WTC11 (cell line): ENCODE measurements at regions of chr1 and their contacts with region 1.

Region 1: GRCh38 chr1:40338745-40339424 is 21.8 kb upstream of the COL9A2 start:
- DNase-seq: peak; percentile 96
- ATAC-seq: peak; percentile 98
- H3K4me3 Mint-ChIP-seq: no peak overlapping the region
- H3K27ac Mint-ChIP-seq: no peak overlapping the region
- H3K4me1 Mint-ChIP-seq: 0 out of 2 replicates have a peak, but pooled peaks cover 3% of the 10 kb centered on the region
- H3K27me3 Mint-ChIP-seq: peaks cover 37% of the 10 kb centered on the region
- CTCF ChIP-seq: peak; percentile 96

Region 2: GRCh38 chr1:40153073-40153770 is 185.7 kb before region 1 on chr1:
- CTCF ChIA-PET with region 1: interaction called, 84 read pairs
- POLR2A ChIA-PET with region 1: interaction called, 6 read pairs
- DNase-seq: no peak
- ATAC-seq: peak; percentile 58
- H3K4me3 Mint-ChIP-seq: no peak overlapping the region
- H3K27ac Mint-ChIP-seq: no peak overlapping the region
- H3K4me1 Mint-ChIP-seq: no peaks in the 10 kb centered on the region
- H3K27me3 Mint-ChIP-seq: peaks cover 4% of the 10 kb centered on the region
- CTCF ChIP-seq: peak; percentile 2; the same call in 1 of the 2 replicates

Region 3: DNA sequence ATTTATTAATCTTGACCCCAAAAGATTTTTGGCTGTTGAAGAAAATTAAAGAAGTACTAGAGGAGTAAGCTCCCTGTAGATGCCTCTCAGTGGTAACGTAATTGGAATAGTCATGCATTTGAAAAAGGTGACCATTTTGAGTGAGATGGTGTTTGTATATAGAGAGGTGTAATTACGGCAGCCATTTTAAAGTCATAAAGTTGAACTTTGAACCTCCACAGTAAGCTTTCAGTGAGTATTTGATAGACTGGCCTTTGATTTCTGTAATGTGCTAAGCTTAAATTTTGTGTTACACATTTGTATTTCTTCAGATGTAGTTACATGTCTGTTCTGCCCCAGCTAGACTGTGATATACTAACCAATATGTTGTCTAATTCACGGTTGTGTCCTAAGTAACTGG is 112.7 kb before region 1 on chr1:
- CTCF ChIA-PET with region 1: interaction called, 16 read pairs
- POLR2A ChIA-PET with region 1: no interaction called
- DNase-seq: no peak
- ATAC-seq: no peak
- H3K4me3 Mint-ChIP-seq: no peak overlapping the region
- H3K27ac Mint-ChIP-seq: peak overlapping the region; percentile 74; the same call in 1 of the 2 replicates
- H3K4me1 Mint-ChIP-seq: no peaks in the 10 kb centered on the region
- H3K27me3 Mint-ChIP-seq: no peaks in the 10 kb centered on the region
- CTCF ChIP-seq: no peak

Region 4: DNA sequence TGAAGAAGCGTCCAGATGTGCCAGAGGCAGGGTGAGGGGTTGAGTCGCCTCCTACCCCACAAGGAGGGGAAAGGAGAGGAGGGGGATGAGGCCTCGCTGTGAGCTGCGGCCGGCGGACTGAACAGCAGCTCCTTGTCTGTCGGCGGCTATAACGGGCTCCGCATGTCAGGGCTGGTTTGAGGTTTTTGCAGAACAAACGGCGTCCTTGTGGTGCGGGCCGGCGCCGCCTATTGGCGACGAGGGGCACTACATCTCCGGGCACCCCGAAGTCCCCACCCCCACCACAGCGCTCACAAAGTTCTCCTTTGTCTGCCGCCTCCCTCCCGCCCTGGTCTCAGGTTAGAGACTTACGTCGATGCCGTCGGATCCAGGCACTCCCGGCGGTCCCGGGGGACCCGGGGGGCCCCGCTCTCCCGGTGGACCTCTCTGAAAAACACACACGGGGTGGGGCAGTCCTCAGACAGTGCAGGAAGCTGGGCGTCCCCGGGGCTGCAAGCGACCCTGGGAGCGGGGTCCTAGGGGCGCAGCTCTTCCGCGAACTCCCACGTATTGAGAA is 23.6 kb before region 1 on chr1:
- CTCF ChIA-PET with region 1: interaction called, 151 read pairs
- POLR2A ChIA-PET with region 1: interaction called, 3 read pairs
- DNase-seq: peak; percentile 89
- ATAC-seq: peak; percentile 65
- H3K4me3 Mint-ChIP-seq: peak overlapping the region; percentile 73
- H3K27ac Mint-ChIP-seq: no peak overlapping the region
- H3K4me1 Mint-ChIP-seq: peaks cover 20% of the 10 kb centered on the region
- H3K27me3 Mint-ChIP-seq: peaks cover 80% of the 10 kb centered on the region
- CTCF ChIP-seq: peak; percentile 96

Region 5: DNA sequence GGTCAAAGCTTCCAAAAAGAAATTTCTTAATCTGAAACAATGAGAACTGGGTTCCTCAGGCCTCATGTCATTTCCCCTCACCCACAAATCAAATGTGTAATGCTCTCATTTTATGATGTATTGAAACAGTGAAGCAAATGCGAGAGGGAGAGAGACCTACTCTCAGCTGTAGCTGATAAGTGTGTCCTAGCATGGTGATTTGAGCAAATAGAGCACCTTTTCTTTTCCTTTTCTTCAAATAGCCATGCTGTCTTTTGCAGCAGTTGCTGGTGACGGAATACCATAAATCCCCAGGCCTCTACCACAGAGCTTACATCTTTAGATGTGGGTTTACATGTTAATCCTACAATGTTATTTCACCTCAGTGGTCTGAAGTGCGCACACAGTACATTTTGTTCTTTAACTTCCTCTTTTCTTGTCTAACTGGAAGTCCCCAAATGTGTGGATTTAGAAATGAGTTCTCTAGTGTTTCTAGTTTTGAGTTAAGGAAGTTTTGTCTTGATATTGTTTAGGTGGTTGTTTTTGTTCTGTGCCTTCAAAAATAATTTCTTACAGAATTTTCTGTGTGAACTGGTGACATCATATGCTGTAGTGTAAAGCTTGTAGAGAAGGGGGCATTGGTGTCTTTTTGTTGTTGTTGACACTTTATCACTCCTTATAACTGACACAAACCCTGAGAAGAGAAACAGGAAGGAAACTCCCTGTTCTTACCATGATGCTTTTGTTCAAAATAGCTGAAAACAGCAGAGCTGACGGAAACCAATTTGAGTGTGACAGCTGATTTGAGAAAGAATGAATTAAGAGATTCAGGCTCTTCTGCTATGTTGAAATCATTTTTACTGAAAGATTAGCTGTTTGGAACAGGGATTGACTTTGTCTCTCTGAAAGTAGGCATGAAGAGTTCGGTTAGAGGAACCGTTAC is 46.8 kb after region 1 on chr1:
- CTCF ChIA-PET with region 1: interaction called, 14 read pairs
- POLR2A ChIA-PET with region 1: no interaction called
- DNase-seq: no peak
- ATAC-seq: no peak
- H3K4me3 Mint-ChIP-seq: no peak overlapping the region
- H3K27ac Mint-ChIP-seq: 0 out of 2 replicates have a peak overlapping the region, but pooled peaks have one; percentile 29
- H3K4me1 Mint-ChIP-seq: peaks cover 8% of the 10 kb centered on the region; the same call in 1 of the 2 replicates
- H3K27me3 Mint-ChIP-seq: no peaks in the 10 kb centered on the region
- CTCF ChIP-seq: no peak

Region 6: DNA sequence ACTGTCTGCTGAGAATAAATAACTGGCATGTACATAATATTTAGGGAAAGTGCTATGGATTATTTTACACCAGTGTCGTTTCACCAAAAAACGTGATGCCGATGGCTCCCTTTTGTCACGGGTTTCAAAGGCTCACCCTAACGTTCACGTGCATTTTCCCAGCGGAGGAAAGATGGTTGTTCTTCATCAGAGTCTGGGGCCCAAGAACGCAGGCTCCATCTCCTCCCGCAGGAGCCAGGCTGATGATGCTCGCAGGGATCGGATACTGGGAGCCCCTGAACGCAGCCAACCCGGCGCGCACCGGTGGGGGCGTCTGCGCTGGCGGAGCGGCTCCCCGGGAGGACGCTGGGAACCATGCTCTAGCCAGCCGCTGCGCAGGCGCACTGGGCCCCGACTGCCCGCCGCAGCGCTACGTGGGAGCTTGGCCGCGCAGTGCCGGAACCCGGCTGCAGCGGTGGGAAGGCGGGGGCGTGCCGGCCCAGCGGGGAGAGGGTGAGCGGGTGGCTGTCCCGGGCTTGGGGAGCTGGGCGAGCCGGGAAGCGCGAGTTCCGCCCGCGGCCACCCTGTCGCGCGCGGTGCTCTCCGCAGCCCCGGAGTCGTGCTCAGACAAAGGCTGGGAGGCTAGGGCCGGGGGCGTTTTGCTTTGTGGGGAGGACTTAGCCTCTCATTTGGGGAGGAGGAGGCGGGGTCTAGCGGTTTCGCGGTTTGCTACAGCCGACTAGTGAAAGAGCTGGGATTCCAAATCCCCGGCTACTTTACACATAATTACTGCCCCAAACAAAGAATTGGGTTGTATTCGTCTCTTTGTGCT is 111.0 kb after region 1 on chr1 and contains the start of gene ZFP69B:
- CTCF ChIA-PET with region 1: interaction called, 10 read pairs
- POLR2A ChIA-PET with region 1: no interaction called
- DNase-seq: peak; percentile 94
- ATAC-seq: peak; percentile 93
- H3K4me3 Mint-ChIP-seq: peak within 1 kb of the TSS; percentile 81
- H3K27ac Mint-ChIP-seq: peak within 1 kb of the TSS; percentile 80
- H3K4me1 Mint-ChIP-seq: peaks cover 22% of the 10 kb centered on the region
- H3K27me3 Mint-ChIP-seq: peaks cover 4% of the 10 kb centered on the region
- CTCF ChIP-seq: no peak
- total RNA-seq, gene ZFP69B: 6.8 to 8.2 TPM (median 7.1 TPM) in 3 replicates

Region 7: DNA sequence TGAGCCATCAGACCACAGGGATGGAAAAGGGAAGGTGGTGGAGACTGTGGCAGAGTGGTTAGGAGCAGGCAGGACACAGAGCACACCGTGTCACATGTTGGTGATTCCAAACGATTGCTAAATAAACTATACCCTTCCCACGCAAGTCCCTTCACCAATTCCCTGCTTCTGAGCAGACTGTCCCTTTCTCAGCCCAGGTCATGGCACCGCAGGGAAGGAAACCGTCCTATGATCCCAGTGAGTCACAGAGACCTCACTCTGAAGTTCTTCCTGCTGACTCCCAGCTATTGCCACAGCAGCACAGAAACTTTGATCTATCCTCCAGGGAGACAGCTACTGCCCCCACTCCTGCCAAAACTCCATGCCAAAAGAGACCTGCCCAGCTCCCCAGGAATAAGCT is 307.4 kb after region 1 on chr1:
- CTCF ChIA-PET with region 1: no interaction called
- POLR2A ChIA-PET with region 1: no interaction called
- DNase-seq: no peak
- ATAC-seq: no peak
- H3K4me3 Mint-ChIP-seq: no peak overlapping the region
- H3K27ac Mint-ChIP-seq: no peak overlapping the region
- H3K4me1 Mint-ChIP-seq: 0 out of 2 replicates have a peak, but pooled peaks cover 5% of the 10 kb centered on the region
- H3K27me3 Mint-ChIP-seq: no peaks in the 10 kb centered on the region
- CTCF ChIP-seq: no peak